ENCODE measurements at regions of chr3 and their contacts with region 1.

Region 1: DNA sequence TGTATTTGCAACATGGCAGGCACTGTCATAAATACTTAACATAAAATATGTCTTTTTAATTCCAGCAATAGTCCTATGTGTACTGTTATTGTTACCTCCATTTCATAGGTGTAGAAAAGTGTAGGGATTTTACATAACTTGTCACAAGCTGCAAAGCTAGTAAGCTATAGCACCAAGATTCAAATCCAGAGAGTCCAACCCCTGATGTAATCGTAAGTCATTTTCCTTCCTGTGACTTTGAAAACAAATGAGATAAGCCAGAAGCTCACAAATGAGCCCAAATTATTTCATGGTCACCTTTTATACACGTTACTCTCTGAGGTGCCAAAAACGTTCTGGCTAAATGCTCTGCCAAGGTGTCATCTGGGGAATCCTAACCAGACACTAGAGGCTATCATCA is 23.8 kb downstream of the TNIK start:
- DNase-seq: no peak
- H3K4me3 ChIP-seq: no peak overlapping the region
- H3K27ac ChIP-seq: no peak overlapping the region
- H3K4me1 ChIP-seq: no peaks in the 10 kb centered on the region
- H3K27me3 ChIP-seq: no peaks in the 10 kb centered on the region
- CTCF ChIP-seq: no peak

Region 2: GRCh38 chr3:171543759-171544654 is 107.6 kb after region 1 on chr3:
- CTCF ChIA-PET with region 1: no interaction called
- dilution Hi-C with region 1: loop called (anchors 5 kb)
- in situ Hi-C with region 1: no loop called
- intact Hi-C with region 1: no loop called
- DNase-seq: no peak
- H3K4me3 ChIP-seq: no peak overlapping the region
- H3K27ac ChIP-seq: no peak overlapping the region
- H3K4me1 ChIP-seq: no peaks in the 10 kb centered on the region
- H3K27me3 ChIP-seq: no peaks in the 10 kb centered on the region
- CTCF ChIP-seq: no peak

Region 3: DNA sequence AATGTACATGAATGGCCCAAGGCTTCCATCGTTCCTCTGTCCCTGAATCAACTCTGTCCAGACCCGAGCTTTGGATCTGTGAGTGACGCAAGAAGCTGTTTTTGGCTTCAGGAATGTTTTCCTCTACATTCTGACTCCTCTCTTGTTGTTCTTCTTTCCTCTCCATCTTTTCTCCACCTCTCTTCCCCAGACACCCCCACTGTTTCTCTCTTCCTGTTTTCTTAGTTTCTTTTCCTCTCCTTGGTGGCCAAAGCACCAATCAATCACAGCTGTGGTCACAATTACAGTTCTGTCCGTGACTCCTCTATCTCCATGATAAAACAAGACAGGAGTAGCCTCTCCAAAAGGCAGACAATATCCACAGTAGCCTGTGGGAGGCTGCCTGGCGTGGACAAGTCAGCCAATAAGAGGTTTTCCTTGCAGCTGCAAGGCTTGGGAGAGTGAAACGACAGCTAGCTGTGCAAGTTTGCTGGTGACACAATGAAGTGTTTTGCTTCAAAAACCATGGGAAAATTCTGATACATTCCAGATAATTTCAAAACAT is 401.9 kb after region 1 on chr3:
- CTCF ChIA-PET with region 1: no interaction called
- dilution Hi-C with region 1: no loop called
- in situ Hi-C with region 1: no loop called
- intact Hi-C with region 1: no loop called
- DNase-seq: peak; percentile 23
- H3K4me3 ChIP-seq: no peak overlapping the region
- H3K27ac ChIP-seq: no peak overlapping the region
- H3K4me1 ChIP-seq: peaks cover 5% of the 10 kb centered on the region
- H3K27me3 ChIP-seq: no peaks in the 10 kb centered on the region
- CTCF ChIP-seq: no peak

Measured in mammary epithelial cell (primary cell).